ENCODE measurements at regions of chr16 and their contacts with region 1.

Region 1: DNA sequence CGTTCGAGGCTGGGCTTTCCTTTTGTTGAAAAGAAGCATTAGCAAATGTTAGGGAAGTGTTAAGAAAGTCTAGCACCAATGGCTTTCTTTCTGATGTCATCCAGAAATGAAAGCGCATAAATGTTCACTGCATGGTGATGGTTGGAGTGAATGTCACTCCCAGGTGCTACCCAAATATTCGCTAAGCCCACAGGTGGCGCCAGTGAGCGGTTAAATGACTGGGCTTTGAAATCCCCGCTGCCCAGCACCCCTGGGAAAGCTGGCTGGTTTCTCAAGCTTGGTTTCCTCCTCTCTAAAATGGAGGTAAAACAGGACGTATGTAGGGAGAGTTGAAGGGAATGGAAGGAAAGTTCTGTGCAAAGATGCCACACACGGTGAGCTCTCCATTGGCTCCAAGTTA is 104.4 kb downstream of the IRX5 start:
- DNase-seq: peak in 2 of 5 donors; percentile 43
- ATAC-seq: peak in 1 of 4 donors; percentile 59
- H3K4me3 ChIP-seq: no peak overlapping the region
- H3K27ac ChIP-seq: no peak overlapping the region
- H3K4me1 ChIP-seq: no peaks in the 10 kb centered on the region
- H3K27me3 ChIP-seq: peaks cover 0 to 5% (median 0%) of the 10 kb centered on the region in 9 donors
- CTCF ChIP-seq: peak; percentile 17 to 59 (median 36)
- POLR2A ChIP-seq: no peak

Region 2: GRCh38 chr16:54987081-54987480 is 47.9 kb before region 1 on chr16:
- intact Hi-C with region 1: loop called in 1 of 10 experiments (anchors 5 kb)
- DNase-seq: no peak
- ATAC-seq: no peak
- H3K4me3 ChIP-seq: no peak overlapping the region
- H3K27ac ChIP-seq: no peak overlapping the region
- H3K4me1 ChIP-seq: peaks cover 0 to 22% (median 5%) of the 10 kb centered on the region in 12 donors
- H3K27me3 ChIP-seq: peaks cover 0 to 4% (median 0%) of the 10 kb centered on the region in 9 donors
- CTCF ChIP-seq: no peak
- POLR2A ChIP-seq: no peak

Region 3: GRCh38 chr16:55015181-55015913 is 19.7 kb before region 1 on chr16:
- intact Hi-C with region 1: no loop called
- DNase-seq: no peak
- ATAC-seq: no peak
- H3K4me3 ChIP-seq: no peak overlapping the region
- H3K27ac ChIP-seq: no peak overlapping the region
- H3K4me1 ChIP-seq: no peaks in the 10 kb centered on the region
- H3K27me3 ChIP-seq: peaks cover 0 to 4% (median 0%) of the 10 kb centered on the region in 9 donors
- CTCF ChIP-seq: no peak
- POLR2A ChIP-seq: no peak

Measured in heart left ventricle (tissue), 16 donors.